ENCODE measurements at regions of chr6 and their contacts with region 1.

Region 1: GRCh38 chr6:25919657-25920056 is 10.8 kb downstream of the SLC17A2 start:
- DNase-seq: no peak
- ATAC-seq: no peak
- H3K4me3 ChIP-seq: no peak overlapping the region
- H3K4me3 Mint-ChIP-seq: no peak overlapping the region
- H3K27ac ChIP-seq: no peak overlapping the region
- H3K27ac Mint-ChIP-seq: no peak overlapping the region
- H3K4me1 ChIP-seq: no peaks in the 10 kb centered on the region
- H3K4me1 Mint-ChIP-seq: no peaks in the 10 kb centered on the region
- H3K27me3 ChIP-seq: no peaks in the 10 kb centered on the region
- H3K27me3 Mint-ChIP-seq: peaks cover 3 to 6% of the 10 kb centered on the region in 2 donors

Region 2: GRCh38 chr6:25637960-25638434 is 281.7 kb before region 1 on chr6:
- CTCF ChIA-PET with region 1: interaction called in 1 of 2 experiments, 10 read pairs
- POLR2A ChIA-PET with region 1: no interaction called
- DNase-seq: no peak
- ATAC-seq: no peak
- H3K4me3 ChIP-seq: no peak overlapping the region
- H3K4me3 Mint-ChIP-seq: no peak overlapping the region
- H3K27ac ChIP-seq: no peak overlapping the region
- H3K27ac Mint-ChIP-seq: no peak overlapping the region
- H3K4me1 ChIP-seq: no peaks in the 10 kb centered on the region
- H3K4me1 Mint-ChIP-seq: no peaks in the 10 kb centered on the region
- H3K27me3 ChIP-seq: peaks cover 2 to 15% of the 10 kb centered on the region in 2 experiments
- H3K27me3 Mint-ChIP-seq: peaks cover 46 to 54% of the 10 kb centered on the region in 2 donors

Measured in T-cell (primary cell).